ENCODE measurements at regions of chr18 and their contacts with region 1.

Region 1: GRCh38 chr18:59402432-59403090 is 43.5 kb upstream of the LMAN1 start:
- DNase-seq: peak; percentile 50
- ATAC-seq: peak; percentile 96
- H3K4me3 Mint-ChIP-seq: no peak overlapping the region
- H3K27ac Mint-ChIP-seq: no peak overlapping the region
- H3K4me1 Mint-ChIP-seq: peaks cover 3% of the 10 kb centered on the region
- H3K27me3 Mint-ChIP-seq: peaks cover 4% of the 10 kb centered on the region
- CTCF ChIP-seq: no peak

Region 2: GRCh38 chr18:59249205-59249774 is 153.3 kb before region 1 on chr18:
- CTCF ChIA-PET with region 1: interaction called, 60 read pairs
- POLR2A ChIA-PET with region 1: no interaction called
- intact Hi-C with region 1: loop called (anchors 1 kb)
- DNase-seq: no peak
- ATAC-seq: peak; percentile 49
- H3K4me3 Mint-ChIP-seq: no peak overlapping the region
- H3K27ac Mint-ChIP-seq: no peak overlapping the region
- H3K4me1 Mint-ChIP-seq: no peaks in the 10 kb centered on the region
- H3K27me3 Mint-ChIP-seq: peaks cover 37% of the 10 kb centered on the region
- CTCF ChIP-seq: no peak

Region 3: GRCh38 chr18:59308248-59308937 is 94.2 kb before region 1 on chr18:
- CTCF ChIA-PET with region 1: interaction called, 62 read pairs
- POLR2A ChIA-PET with region 1: no interaction called
- intact Hi-C with region 1: loop called (anchors 2 kb)
- DNase-seq: peak; percentile 66
- ATAC-seq: peak; percentile 85
- H3K4me3 Mint-ChIP-seq: peak overlapping the region; percentile 52
- H3K27ac Mint-ChIP-seq: no peak overlapping the region
- H3K4me1 Mint-ChIP-seq: peaks cover 6% of the 10 kb centered on the region
- H3K27me3 Mint-ChIP-seq: peaks cover 31% of the 10 kb centered on the region
- CTCF ChIP-seq: no peak

Measured in activated B cell treated with CpG ODN at 0.5 μM for 24 hours (primary cell).